Posterior cingulate gyrus (tissue), 11 donors: ENCODE measurements at regions of chr11 and their contacts with region 1.

Region 1: DNA sequence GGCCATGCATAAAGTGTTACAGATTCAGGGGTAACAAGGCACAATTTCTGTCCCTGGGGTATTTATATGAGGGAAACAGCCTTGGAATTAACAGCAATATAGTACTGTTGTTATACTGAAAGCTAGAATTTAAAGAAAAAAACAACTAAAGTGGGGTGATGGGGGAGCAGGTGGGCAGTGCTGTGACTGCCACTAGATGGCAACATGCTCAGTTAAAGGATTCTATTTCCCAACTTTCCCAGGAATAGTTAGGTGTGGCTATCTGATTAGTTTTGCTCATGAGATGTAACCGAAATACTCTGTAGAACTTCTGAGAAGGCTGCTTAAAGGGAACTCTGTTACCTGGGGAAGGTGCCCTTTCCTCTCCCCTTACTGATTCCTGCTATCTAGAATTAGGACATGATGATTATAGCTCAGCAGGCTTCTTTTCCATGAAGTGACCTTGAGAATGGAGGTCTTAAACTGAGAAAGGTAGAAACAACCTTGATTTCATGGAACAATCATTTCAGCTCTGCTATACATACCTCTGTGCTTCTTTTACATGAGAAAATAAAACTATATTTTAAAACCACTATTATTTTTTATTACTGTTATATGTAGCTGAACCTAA is 102.6 kb downstream of the RELT start:
- DNase-seq: no peak

Region 2: GRCh38 chr11:73597956-73598718 is 119.3 kb after region 1 on chr11 and contains the start of gene FAM168A:
- intact Hi-C with region 1: loop called (anchors 5 kb)
- DNase-seq: peak; percentile 93 to 99 (median 94)